ENCODE measurements at regions of chr2 and their contacts with region 1.

Region 1: GRCh38 chr2:227766373-227766883 is 20.7 kb downstream of the SCYGR8 start:
- DNase-seq: peak; percentile 70 to 76
- ATAC-seq: peak; percentile 90 to 99 (median 96)
- H3K4me3 ChIP-seq: no peak overlapping the region
- H3K27ac ChIP-seq: peak overlapping the region in 6 of 10 donors; percentile 3 to 41 (median 22)
- H3K4me1 ChIP-seq: peaks cover 0 to 8% (median 5%) of the 10 kb centered on the region in 9 donors
- H3K27me3 ChIP-seq: no peaks in the 10 kb centered on the region
- CTCF ChIP-seq: peak; percentile 69 to 93 (median 87)

Region 2: DNA sequence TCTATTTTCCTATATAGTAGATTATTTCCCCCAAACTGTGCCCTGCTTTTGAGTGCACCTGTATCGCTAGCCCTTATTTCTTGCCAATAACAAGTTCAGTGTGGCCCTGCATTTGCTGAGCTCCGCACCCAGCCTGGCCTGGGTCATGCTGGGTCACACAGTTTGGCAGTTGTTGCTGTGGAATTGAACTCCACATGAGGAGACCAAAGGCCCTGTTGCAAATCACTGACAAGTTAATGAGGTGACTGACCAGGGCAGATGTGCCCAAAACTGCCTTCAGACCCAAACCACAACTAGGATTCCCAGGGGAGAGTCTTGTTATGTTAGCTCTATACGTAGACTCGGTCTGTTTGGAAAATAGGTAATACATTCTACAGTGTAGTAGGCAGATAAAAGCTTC is 633.4 kb before region 1 on chr2:
- intact Hi-C with region 1: loop called in 2 of 10 experiments (anchors 10 kb)
- DNase-seq: peak in 1 of 2 donors; percentile 22
- ATAC-seq: peak in 1 of 8 donors; percentile 70
- H3K4me3 ChIP-seq: no peak overlapping the region
- H3K27ac ChIP-seq: peak overlapping the region in 1 of 10 donors; percentile 21
- H3K4me1 ChIP-seq: peaks cover 0 to 13% (median 0%) of the 10 kb centered on the region in 9 donors
- H3K27me3 ChIP-seq: no peaks in the 10 kb centered on the region
- CTCF ChIP-seq: no peak

Region 3: DNA sequence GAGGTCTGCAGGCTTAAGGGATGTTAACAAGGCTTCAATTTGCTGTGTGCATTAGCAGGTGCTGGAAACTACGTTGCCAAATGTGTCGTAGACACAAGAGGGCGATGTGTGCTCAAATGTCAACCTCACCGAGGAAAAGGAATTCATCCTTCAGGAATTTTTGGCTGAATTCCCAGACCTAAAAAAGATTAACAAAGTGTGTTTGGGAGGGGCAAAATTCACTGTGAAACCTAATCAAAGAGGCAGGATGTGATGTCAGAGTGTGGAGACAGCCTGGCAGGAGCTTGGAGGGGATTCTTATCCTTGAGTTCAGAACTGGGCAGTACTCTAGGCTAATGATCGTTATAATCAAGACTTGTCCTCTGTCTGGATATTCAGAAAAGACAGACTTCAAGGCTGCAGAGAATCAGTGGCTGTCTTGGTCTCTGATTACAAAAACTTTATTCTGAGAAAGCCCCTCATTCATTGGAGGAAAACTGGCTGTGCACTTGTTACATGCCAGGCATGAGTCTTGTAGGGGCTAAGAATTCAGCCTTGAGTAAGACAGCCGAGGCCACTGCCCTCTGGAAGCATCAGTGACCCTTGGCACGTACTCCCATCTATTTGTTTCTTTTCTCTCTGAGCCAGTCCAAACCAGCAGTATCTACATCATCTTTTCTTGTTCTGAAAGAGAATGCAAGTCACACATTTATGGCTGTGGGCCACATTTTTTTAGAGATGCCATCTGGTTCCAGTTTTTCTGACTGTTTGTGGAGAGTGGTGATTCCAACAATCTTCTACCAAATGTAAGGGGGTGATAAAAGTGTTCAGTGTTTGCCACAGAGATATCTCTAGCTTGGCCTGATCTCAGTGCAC is 360.0 kb before region 1 on chr2:
- intact Hi-C with region 1: loop called in 9 of 10 experiments (anchors 1 to 10 kb)
- DNase-seq: peak; percentile 20 to 73
- ATAC-seq: peak; percentile 86 to 94 (median 90)
- H3K4me3 ChIP-seq: no peak overlapping the region
- H3K27ac ChIP-seq: peak overlapping the region; percentile 29 to 84 (median 66)
- H3K4me1 ChIP-seq: peaks cover 4 to 48% (median 14%) of the 10 kb centered on the region in 9 donors
- H3K27me3 ChIP-seq: no peaks in the 10 kb centered on the region
- CTCF ChIP-seq: peak; percentile 31 to 85 (median 73)

Region 4: DNA sequence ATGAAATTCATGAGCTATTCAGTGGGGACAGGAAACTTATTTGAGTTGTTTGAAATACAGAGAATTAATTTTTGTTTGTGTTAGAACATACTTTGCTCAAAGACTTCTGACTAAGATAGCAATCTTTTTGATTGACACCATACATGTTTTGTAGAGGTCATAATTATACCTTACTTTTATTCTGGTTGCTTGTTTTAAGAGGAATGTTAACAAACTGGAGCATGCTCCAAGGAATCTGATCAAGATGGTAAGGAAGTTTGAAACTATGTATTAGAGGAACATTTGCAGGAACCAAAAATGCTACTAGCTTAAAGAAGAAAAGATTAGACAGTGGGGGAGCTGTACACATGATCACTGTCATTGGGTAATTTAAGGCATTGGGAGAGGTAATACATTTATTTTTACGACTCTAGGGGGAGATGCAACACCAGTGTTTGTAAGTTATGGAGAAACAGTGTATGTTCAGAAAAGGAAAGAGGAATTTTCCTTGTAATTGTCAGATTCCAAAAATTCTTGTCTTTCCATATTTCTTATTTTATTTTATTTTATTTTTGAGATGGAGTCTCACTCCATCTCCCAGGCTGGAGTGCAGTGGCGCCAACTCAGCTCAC is 286.5 kb before region 1 on chr2:
- intact Hi-C with region 1: loop called in 8 of 10 experiments (anchors 2 to 10 kb)
- DNase-seq: no peak
- ATAC-seq: peak in 7 of 8 donors; percentile 38 to 77 (median 65)
- H3K4me3 ChIP-seq: no peak overlapping the region
- H3K27ac ChIP-seq: no peak overlapping the region
- H3K4me1 ChIP-seq: peaks cover 0 to 76% (median 47%) of the 10 kb centered on the region in 9 donors
- H3K27me3 ChIP-seq: no peaks in the 10 kb centered on the region
- CTCF ChIP-seq: peak in 8 of 9 donors; percentile 12 to 58 (median 40)

Region 5: DNA sequence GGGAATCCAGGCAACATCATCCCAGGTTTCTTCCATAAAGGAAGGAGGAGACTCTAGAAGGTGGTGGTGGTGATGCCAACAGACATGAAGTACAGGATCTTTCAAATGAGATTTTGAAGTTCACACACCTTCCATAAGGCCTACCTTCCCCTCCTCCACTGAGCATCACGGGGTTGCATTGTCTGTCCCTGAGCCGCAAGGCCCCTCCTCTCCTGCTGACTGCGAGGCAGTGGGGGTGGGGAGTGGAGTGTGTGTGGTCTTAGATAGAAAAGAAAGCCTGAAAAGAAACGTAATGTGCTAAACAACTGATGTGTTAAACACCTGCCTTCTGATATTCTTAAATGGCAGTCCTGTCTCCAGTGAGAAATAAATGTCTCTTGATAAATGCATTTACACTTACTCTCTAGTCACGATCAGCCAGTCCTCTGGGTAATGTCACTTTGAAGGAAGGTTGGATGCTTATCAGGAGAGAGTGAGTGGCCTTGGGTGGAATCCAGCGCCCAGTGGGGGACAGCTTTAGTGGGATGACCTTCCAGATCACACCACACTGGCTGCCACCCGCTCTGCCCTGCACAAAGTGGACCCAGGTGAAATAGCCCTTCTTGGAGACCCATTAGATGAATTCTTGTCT is 105.3 kb before region 1 on chr2:
- intact Hi-C with region 1: loop called (anchors 1 to 5 kb)
- DNase-seq: peak in 1 of 2 donors; percentile 21
- ATAC-seq: peak in 1 of 8 donors; percentile 47
- H3K4me3 ChIP-seq: no peak overlapping the region
- H3K27ac ChIP-seq: no peak overlapping the region
- H3K4me1 ChIP-seq: peaks cover 0 to 15% (median 0%) of the 10 kb centered on the region in 9 donors
- H3K27me3 ChIP-seq: peaks cover 0 to 4% (median 0%) of the 10 kb centered on the region in 7 donors
- CTCF ChIP-seq: no peak